ENCODE measurements at regions of chr18 and their contacts with region 1.

Region 1: GRCh38 chr18:13369756-13370510 is 151.4 kb downstream of the LDLRAD4 start:
- DNase-seq: peak; percentile 53

Region 2: GRCh38 chr18:13289481-13290205 is 80.3 kb before region 1 on chr18:
- intact Hi-C with region 1: no loop called
- DNase-seq: no peak

Region 3: DNA sequence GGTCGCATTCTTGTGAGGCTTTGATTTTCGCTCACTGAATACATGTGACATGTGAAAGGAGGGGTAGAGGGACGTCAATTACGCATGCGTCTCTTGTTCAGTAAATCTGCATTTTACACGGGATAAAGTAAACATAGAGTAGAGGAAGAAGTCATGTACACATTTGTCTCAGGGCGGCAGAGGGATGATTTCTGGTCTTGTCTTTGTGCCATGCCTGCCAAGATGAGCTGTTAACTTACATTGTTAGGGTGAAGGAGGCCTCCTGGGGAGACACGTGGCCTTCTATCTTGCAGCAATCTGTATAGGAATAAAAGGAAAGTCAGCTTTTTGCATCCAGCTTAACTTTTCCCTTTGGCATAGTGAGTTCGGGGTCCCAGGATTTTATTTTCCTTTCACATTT is 45.1 kb before region 1 on chr18:
- intact Hi-C with region 1: loop called (anchors 5 kb)
- DNase-seq: no peak

Measured in cardiac septum (tissue), 1 donor.